Heart right ventricle (tissue), 16 donors: ENCODE measurements at regions of chr16 and their contacts with region 1.

Region 1: DNA sequence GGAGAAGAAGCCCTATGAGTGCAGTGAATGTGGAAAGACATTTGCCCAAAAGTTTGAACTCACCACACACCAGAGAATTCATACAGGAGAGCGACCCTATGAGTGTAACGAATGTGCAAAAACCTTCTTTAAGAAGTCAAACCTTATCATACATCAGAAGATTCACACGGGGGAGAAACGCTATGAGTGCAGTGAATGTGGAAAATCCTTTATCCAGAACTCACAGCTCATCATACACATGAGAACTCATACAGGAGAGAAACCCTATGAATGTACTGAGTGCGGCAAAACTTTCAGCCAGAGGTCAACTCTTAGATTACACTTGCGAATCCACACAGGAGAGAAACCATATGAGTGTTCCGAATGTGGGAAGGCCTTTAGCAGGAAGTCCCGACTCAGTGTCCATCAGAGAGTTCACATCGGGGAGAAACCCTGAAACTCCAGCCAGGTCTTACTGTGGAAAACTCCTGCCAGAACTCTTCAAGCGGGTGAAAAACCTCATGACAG is 21.6 kb downstream of the ZFP1 start:
- DNase-seq: no peak
- ATAC-seq: no peak
- H3K4me3 ChIP-seq: no peak overlapping the region
- H3K27ac ChIP-seq: no peak overlapping the region
- H3K4me1 ChIP-seq: no peaks in the 10 kb centered on the region
- H3K27me3 ChIP-seq: no peaks in the 10 kb centered on the region
- CTCF ChIP-seq: no peak

Region 2: DNA sequence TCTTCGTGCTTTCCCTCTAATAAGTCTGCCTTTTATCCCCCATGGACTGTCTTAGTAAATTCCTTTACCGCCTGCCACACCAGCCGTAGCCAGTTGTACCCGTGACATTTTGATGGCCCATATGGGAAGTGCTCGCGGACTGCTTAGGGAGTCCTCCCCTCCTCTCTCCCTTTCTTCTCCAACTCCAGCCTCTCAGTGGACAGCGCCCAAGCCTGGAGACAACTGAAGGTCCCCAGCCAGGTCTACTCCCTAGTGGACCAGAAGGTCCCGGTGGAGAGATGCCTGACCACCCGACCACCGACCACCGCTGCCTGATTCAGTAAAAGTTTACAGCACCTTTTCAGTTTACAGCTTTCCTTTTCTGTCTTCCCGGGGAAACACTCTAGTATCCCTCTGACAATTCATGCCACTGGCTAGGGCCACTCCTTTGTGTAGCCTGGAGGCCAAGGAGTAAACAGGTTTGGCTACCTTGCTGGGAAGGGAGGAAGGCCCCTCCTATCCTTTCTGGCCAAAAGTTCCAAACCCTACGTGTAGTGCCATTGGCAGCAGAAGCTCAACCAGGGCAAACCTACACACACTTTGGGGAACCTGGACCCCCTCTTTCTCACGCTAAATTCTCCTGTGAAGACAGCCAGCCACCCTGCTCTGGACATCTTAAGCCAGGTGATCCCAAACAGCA is 19.0 kb after region 1 on chr16:
- intact Hi-C with region 1: loop called in 1 of 10 experiments (anchors 1 kb)
- DNase-seq: no peak
- ATAC-seq: no peak
- H3K4me3 ChIP-seq: no peak overlapping the region
- H3K27ac ChIP-seq: no peak overlapping the region
- H3K4me1 ChIP-seq: no peaks in the 10 kb centered on the region
- H3K27me3 ChIP-seq: no peaks in the 10 kb centered on the region
- CTCF ChIP-seq: no peak